Common myeloid progenitor, CD34-positive (primary cell): ENCODE measurements at regions of chr15 and their contacts with region 1.

Region 1: GRCh38 chr15:57364282-57365007 is 11.9 kb upstream of the CGNL1 start:
- DNase-seq: peak; percentile 68 to 90 (median 87)
- H3K4me3 ChIP-seq: peak overlapping the region in 2 of 7 experiments; percentile 1
- H3K27ac ChIP-seq: no peak overlapping the region
- H3K4me1 ChIP-seq: peaks cover 4 to 19% (median 16%) of the 10 kb centered on the region in 4 experiments
- H3K27me3 ChIP-seq: no peaks in the 10 kb centered on the region

Region 2: DNA sequence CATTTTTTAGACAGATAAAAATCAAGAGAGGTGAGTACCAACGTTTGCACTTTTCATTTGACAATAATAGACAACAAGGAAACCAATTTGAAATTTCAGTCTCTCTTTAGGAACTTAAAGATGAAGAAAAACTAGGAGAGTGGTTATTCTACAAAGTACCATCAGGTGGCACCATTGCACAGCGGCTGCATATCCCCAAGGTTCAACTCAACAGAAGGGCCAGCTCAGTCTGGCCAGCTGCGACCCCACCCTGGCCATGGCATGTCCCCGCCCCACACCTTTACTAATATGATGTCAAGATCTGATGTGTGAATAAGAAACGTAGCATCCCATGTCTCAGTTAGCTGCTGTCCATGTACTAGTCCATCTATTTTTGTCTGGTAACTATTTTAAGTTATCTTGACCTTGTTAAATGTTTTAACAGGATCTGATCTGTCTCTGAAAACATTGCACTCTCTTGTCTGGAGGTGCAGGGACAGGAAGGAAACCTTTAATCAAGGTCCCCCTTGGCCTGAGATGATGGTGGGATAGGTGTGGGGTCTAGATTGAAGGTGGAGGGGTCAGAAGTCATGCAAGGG is 23.7 kb before region 1 on chr15:
- CTCF ChIA-PET with region 1: interaction called, 13 read pairs
- POLR2A ChIA-PET with region 1: no interaction called
- DNase-seq: peak; percentile 58 to 80 (median 64)
- H3K4me3 ChIP-seq: no peak overlapping the region
- H3K27ac ChIP-seq: no peak overlapping the region
- H3K4me1 ChIP-seq: peaks cover 0 to 12% (median 9%) of the 10 kb centered on the region in 4 experiments
- H3K27me3 ChIP-seq: no peaks in the 10 kb centered on the region